Astrocyte of the cerebellum (primary cell): ENCODE measurements at regions of chr3 and their contacts with region 1.

Region 1: GRCh38 chr3:47542471-47543173 is 29.1 kb upstream of the ELP6 start:
- DNase-seq: peak; percentile 4
- H3K4me3 ChIP-seq: no peak overlapping the region
- CTCF ChIP-seq: no peak

Region 2: DNA sequence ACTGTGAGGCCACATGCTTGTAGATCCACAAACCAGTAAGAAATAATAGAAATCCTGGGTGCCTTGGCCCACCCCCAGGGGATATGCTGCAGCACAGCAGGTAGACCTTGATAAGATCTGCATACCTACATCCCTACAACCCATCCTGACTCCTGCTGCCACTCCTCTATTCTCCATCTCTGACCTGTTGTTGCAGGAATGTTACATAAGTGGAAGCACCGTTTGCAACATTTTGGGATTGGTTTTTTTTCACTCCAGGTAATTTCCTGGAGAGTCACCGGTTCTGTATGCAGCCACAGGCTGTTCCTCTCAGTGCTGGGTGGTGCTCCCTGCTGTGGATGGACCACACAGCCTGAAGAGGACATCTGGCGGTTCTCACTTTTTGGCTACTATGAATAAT is 52.2 kb after region 1 on chr3:
- in situ Hi-C with region 1: loop called (anchors 10 kb)
- DNase-seq: no peak
- H3K4me3 ChIP-seq: no peak overlapping the region
- CTCF ChIP-seq: no peak